ENCODE measurements at regions of chr10 and their contacts with region 1.

Region 1: DNA sequence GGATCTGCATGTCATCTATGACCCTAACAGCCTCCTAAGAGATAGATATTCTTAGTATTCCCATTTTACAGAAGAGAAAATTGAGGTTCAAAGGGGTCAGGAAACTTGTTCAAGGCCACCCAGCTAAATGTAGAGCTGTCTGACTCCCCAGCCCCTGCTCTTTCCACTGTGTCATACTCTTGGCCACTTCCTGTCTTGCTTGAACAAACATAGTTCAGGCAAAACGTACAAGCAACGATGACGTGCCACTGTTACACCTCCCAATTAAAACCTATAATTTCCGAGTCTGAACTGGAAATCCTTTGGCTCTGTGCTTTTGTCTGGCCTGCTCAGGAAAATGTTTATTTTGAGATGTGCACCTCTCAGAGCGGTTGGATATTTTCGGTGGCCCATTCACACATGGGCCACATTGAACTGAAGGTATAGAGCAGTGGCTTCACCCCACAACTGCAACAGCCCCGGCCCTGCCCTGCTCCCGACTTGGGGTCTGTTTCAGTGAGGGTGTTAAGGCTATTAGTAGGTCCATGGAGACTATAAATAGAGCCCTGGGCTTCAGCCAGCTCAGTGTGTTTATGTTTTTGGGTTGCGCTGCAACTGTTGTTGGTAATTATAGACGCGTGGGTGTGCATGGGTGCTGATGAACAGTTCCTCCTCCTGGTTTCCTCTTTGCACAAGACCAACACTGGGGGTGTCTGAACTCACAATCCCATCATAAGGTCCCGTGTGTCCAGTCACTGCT is 172.3 kb upstream of the ADO start:
- DNase-seq: no peak
- ATAC-seq: peak; percentile 81
- H3K4me3 Mint-ChIP-seq: peak overlapping the region; percentile 83
- H3K27ac Mint-ChIP-seq: peak overlapping the region; percentile 98
- H3K4me1 Mint-ChIP-seq: peaks cover 58% of the 10 kb centered on the region
- H3K27me3 Mint-ChIP-seq: no peaks in the 10 kb centered on the region
- CTCF ChIP-seq: no peak

Region 2: DNA sequence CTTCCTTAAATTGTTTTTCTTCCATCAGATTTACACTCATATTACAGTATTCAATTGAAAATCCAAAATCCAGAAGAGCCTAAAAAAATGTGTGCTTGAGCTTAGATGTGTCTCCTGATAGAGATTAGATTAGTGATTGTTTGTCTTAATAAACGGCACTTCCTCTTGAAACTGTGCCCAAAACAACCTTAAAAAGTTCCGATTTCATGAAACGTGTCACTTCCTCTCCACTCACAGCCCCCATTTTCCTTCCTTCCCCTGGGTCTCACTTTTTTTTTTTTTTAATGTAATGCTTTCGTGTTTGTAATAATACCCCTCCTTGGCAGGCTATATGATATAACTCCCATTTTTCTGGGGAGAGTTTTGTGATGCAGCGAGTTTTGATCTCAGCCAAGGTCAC is 57.5 kb after region 1 on chr10:
- CTCF ChIA-PET with region 1: no interaction called
- POLR2A ChIA-PET with region 1: no interaction called
- intact Hi-C with region 1: loop called (anchors 2 kb)
- DNase-seq: no peak
- ATAC-seq: peak; percentile 76
- H3K4me3 Mint-ChIP-seq: peak overlapping the region; percentile 70
- H3K27ac Mint-ChIP-seq: peak overlapping the region; percentile 75
- H3K4me1 Mint-ChIP-seq: peaks cover 43% of the 10 kb centered on the region
- H3K27me3 Mint-ChIP-seq: no peaks in the 10 kb centered on the region
- CTCF ChIP-seq: no peak

Region 3: GRCh38 chr10:62804356-62805230 is 172.4 kb after region 1 on chr10 and contains the start of gene ADO:
- CTCF ChIA-PET with region 1: no interaction called
- POLR2A ChIA-PET with region 1: interaction called, 6 read pairs
- intact Hi-C with region 1: loop called (anchors 1 kb)
- DNase-seq: peak; percentile 77
- ATAC-seq: peak; percentile 87
- H3K4me3 Mint-ChIP-seq: peak within 1 kb of the TSS; percentile 95
- H3K27ac Mint-ChIP-seq: peak within 1 kb of the TSS; percentile 99
- H3K4me1 Mint-ChIP-seq: peaks cover 41% of the 10 kb centered on the region
- H3K27me3 Mint-ChIP-seq: no peaks in the 10 kb centered on the region
- CTCF ChIP-seq: no peak
- total RNA-seq, gene ADO: 21.6 and 21.7 TPM in 2 replicates

Region 4: DNA sequence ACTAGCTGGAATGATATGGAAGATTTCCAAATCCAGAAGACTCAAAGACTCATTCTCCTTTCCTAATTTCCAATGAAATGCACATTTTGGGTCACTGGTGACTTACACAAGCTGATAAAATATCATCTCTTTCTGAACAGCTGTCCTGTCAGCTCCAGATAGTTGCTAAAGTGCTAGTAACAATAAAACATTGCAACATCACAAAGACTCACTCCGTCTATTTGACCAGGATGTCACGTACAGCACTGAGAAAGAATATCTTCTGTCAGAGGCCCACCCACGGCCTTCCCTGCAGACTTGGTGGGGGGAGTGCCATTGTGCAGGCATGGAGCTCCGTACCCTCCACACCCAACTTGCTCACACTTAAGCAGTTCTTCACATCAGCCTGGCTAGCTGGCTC is 262.8 kb after region 1 on chr10:
- CTCF ChIA-PET with region 1: no interaction called
- POLR2A ChIA-PET with region 1: no interaction called
- intact Hi-C with region 1: no loop called
- DNase-seq: no peak
- ATAC-seq: no peak
- H3K4me3 Mint-ChIP-seq: no peak overlapping the region
- H3K27ac Mint-ChIP-seq: no peak overlapping the region
- H3K4me1 Mint-ChIP-seq: no peaks in the 10 kb centered on the region
- H3K27me3 Mint-ChIP-seq: peaks cover 3% of the 10 kb centered on the region
- CTCF ChIP-seq: no peak

Measured in activated B cell treated with CpG ODN at 0.5 μM for 24 hours (primary cell).